Heart left ventricle (tissue), 16 donors: ENCODE measurements at regions of chr15 and their contacts with region 1.

Region 1: DNA sequence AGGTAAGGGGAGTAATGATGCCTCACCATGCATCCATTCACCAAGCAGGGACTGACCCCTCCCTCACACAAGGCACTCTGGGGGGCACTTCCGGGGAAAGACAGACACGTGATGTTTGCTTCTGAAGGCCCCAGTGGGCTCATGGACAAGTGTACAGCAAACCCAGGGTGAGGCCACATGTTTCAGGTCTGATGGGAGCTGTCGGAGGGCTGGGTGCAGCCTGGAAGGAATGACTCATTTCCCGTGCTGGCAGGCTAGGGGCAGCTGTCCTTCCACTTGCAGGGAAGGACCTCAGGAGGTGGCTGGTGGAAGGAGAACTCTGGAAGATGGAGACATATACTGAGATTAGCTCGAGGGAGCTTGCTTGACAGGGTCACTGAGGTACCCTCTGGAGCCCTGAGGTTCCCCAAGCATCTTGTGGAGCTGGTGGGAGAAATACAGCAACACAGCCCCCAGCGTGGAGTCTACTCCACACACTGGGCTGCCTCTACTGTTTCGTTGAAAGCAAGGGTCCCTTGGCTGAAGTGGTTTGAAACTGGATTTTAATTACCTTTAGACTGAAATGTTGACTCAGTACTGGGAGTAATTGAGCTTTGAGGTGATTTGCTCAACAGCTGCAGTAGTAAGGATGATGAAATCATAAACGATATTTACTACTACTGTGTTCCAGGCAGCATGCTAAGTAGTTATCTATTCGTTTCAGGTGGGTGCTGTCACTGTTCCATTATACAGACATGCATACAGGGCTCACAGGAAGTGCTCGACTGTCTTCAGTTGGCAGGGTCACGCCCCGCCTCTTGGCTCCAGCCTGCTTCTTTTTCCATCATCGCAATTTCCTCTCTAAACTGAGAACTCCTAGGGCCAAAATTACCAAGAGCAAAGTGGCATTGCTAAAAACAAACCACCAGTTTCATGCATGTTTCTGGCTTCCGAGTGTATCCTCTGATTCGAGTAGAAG is 230.4 kb downstream of the ADAMTS17 start:
- DNase-seq: peak; percentile 73 to 90 (median 78)
- ATAC-seq: peak; percentile 25 to 80 (median 73)
- H3K4me3 ChIP-seq: no peak overlapping the region
- H3K27ac ChIP-seq: peak overlapping the region; percentile 64 to 100 (median 93)
- H3K4me1 ChIP-seq: peaks cover 12 to 68% (median 57%) of the 10 kb centered on the region in 12 donors
- H3K27me3 ChIP-seq: no peaks in the 10 kb centered on the region
- CTCF ChIP-seq: peak in 1 of 12 donors; percentile 11
- POLR2A ChIP-seq: no peak

Region 2: GRCh38 chr15:100060276-100061255 is 50.8 kb before region 1 on chr15:
- intact Hi-C with region 1: loop called in 2 of 10 experiments (anchors 5 to 10 kb)
- DNase-seq: peak in 3 of 5 donors; percentile 25 to 47 (median 35)
- ATAC-seq: peak in 3 of 4 donors; percentile 58 to 82 (median 74)
- H3K4me3 ChIP-seq: no peak overlapping the region
- H3K27ac ChIP-seq: no peak overlapping the region
- H3K4me1 ChIP-seq: peaks cover 0 to 23% (median 8%) of the 10 kb centered on the region in 12 donors
- H3K27me3 ChIP-seq: no peaks in the 10 kb centered on the region
- CTCF ChIP-seq: no peak
- POLR2A ChIP-seq: no peak

Region 3: DNA sequence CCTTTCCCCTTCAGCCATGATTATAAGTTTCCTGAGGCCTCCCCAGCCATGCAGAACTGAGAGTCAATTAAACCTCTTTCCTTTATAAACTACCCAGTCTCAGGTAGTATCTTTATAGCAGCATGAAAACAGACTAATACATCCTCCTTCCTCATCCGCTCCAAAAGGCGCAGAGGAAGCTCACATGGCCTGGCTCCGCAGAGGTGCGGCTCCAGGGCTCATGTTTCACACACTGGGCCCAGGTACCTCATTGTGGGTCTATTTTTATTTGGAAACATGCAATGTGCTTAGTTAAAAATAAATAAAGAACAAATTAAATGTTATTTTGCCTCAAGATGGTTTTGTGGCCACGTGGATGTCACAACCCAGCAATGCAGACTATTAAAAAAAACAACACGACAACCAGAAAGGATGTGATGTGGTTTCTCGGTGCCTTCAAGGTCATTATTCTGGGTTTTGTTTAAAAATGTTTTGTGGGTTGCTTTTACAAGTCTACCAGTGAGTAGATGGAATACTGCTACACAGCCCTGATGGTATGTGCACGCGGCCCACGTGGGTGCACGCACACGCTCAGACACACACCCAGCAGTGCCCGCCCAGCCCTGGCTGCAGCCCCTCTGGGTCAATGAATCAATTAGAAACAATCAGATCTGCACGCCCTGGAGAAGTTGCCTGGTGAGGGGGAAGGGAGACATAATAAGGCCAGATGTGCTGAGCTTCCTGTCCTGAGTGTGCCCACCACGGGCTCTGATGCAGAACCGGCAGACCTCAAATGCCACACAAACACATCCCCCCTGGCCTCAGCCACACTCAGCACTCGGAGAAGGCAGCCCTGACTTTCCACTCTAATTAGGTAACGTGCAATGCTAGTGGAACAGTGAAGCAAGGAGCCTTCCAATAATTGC is 90.2 kb after region 1 on chr15:
- intact Hi-C with region 1: loop called in 1 of 10 experiments (anchors 10 kb)
- DNase-seq: no peak
- ATAC-seq: no peak
- H3K4me3 ChIP-seq: no peak overlapping the region
- H3K27ac ChIP-seq: no peak overlapping the region
- H3K4me1 ChIP-seq: peaks cover 0 to 6% (median 0%) of the 10 kb centered on the region in 12 donors
- H3K27me3 ChIP-seq: no peaks in the 10 kb centered on the region
- CTCF ChIP-seq: no peak
- POLR2A ChIP-seq: no peak